GM12878 (cell line): ENCODE measurements at regions of chr4 and their contacts with region 1.

Region 1: GRCh38 chr4:26404743-26405206 is 84.0 kb downstream of the RBPJ start:
- DNase-seq: no peak
- ATAC-seq: no peak
- H3K4me3 ChIP-seq: no peak overlapping the region
- H3K27ac ChIP-seq: no peak overlapping the region
- H3K4me1 ChIP-seq: peaks cover 10% of the 10 kb centered on the region
- H3K27me3 ChIP-seq: no peaks in the 10 kb centered on the region
- CTCF ChIP-seq: no peak
- EP300 ChIP-seq: no peak
- POLR2A ChIP-seq: no peak
- RAD21 ChIP-seq: no peak

Region 2: GRCh38 chr4:26061248-26061986 is 343.4 kb before region 1 on chr4:
- CTCF ChIA-PET with region 1: interaction called, 33 read pairs
- POLR2A ChIA-PET with region 1: interaction called, 3 read pairs
- RAD21 ChIA-PET with region 1: interaction called, 6 read pairs
- SMC1A ChIA-PET with region 1: interaction called, 9 read pairs
- in situ Hi-C with region 1: loop called (anchors 10 kb)
- intact Hi-C with region 1: no loop called
- DNase-seq: no peak
- ATAC-seq: peak; percentile 96
- H3K4me3 ChIP-seq: no peak overlapping the region
- H3K27ac ChIP-seq: no peak overlapping the region
- H3K4me1 ChIP-seq: peaks cover 9% of the 10 kb centered on the region; the same call in 1 of the 2 replicates
- H3K27me3 ChIP-seq: no peaks in the 10 kb centered on the region; a peak in 3 of 4 replicates
- CTCF ChIP-seq: peak; percentile 64 to 76 (median 76); a peak in 5 of 6 replicates
- EP300 ChIP-seq: no peak
- POLR2A ChIP-seq: no peak
- RAD21 ChIP-seq: peak; percentile 94

Region 3: DNA sequence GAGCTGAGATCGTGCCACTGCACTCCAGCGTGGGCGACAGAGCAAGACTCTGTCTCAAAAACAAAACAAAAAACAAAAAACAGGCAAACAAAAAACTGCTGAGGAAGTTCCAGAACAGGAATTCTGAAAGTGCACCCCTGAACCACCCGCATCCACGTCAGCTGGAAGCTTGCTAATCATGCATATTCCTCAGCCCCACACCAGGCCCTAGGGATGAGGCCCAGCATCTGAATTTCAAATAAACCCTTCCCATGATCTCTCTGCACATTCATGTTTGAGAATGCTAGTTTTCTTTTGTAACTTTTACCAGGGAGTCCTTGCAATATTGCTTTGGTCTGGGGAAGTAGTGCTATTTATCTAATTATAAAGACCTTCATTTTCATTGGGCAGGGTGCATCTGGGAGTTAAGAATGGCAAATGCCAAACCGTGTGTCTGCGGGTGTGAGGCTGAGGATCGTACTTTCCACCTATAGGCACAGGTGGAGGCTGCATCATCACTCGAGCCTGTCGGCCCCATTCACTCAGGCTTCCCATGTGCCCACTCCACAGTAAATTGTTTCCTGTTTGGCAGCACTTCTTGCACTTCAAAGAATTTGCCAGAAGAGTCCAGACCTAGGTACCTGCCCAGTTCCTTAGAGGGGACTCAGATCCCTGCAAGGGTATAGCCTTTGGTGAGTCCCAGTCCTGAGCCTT is 61.9 kb after region 1 on chr4:
- CTCF ChIA-PET with region 1: no interaction called
- POLR2A ChIA-PET with region 1: no interaction called
- RAD21 ChIA-PET with region 1: no interaction called
- SMC1A ChIA-PET with region 1: no interaction called
- in situ Hi-C with region 1: no loop called
- intact Hi-C with region 1: no loop called
- DNase-seq: no peak
- ATAC-seq: no peak
- H3K4me3 ChIP-seq: no peak overlapping the region
- H3K27ac ChIP-seq: no peak overlapping the region
- H3K4me1 ChIP-seq: no peaks in the 10 kb centered on the region
- H3K27me3 ChIP-seq: peaks cover 0 to 2% of the 10 kb centered on the region in 2 experiments; a peak in 2 of 4 replicates
- CTCF ChIP-seq: no peak
- EP300 ChIP-seq: no peak
- POLR2A ChIP-seq: no peak
- RAD21 ChIP-seq: no peak